Mammary epithelial cell (primary cell): ENCODE measurements at regions of chr11 and their contacts with region 1.

Region 1: GRCh38 chr11:19790831-19791552 is 78.4 kb downstream of the NAV2 start:
- DNase-seq: no peak
- H3K4me3 ChIP-seq: no peak overlapping the region
- H3K27ac ChIP-seq: no peak overlapping the region
- H3K4me1 ChIP-seq: no peaks in the 10 kb centered on the region
- H3K27me3 ChIP-seq: no peaks in the 10 kb centered on the region
- CTCF ChIP-seq: no peak

Region 2: GRCh38 chr11:19756675-19757475 is 34.1 kb before region 1 on chr11:
- CTCF ChIA-PET with region 1: no interaction called
- dilution Hi-C with region 1: no loop called
- in situ Hi-C with region 1: no loop called
- intact Hi-C with region 1: loop called (anchors 5 kb)
- DNase-seq: no peak
- H3K4me3 ChIP-seq: no peak overlapping the region
- H3K27ac ChIP-seq: no peak overlapping the region
- H3K4me1 ChIP-seq: no peaks in the 10 kb centered on the region
- H3K27me3 ChIP-seq: no peaks in the 10 kb centered on the region
- CTCF ChIP-seq: no peak

Region 3: GRCh38 chr11:19832086-19832750 is 41.2 kb after region 1 on chr11:
- CTCF ChIA-PET with region 1: no interaction called
- dilution Hi-C with region 1: loop called (anchors 5 kb)
- in situ Hi-C with region 1: no loop called
- intact Hi-C with region 1: no loop called
- DNase-seq: no peak
- H3K4me3 ChIP-seq: no peak overlapping the region
- H3K27ac ChIP-seq: no peak overlapping the region
- H3K4me1 ChIP-seq: peaks cover 21% of the 10 kb centered on the region
- H3K27me3 ChIP-seq: no peaks in the 10 kb centered on the region
- CTCF ChIP-seq: no peak